ENCODE measurements at regions of chr11 and their contacts with region 1.

Region 1: GRCh38 chr11:16820324-16821092 is 82.1 kb downstream of the C11orf58 start:
- DNase-seq: peak; percentile 77 to 82
- ATAC-seq: peak; percentile 86 to 90
- H3K4me3 ChIP-seq: no peak overlapping the region
- H3K27ac ChIP-seq: peak overlapping the region in 1 of 2 experiments; percentile 50; a peak in 2 of 6 replicates
- H3K4me1 ChIP-seq: peaks cover 29% of the 10 kb centered on the region
- CTCF ChIP-seq: peak; percentile 91
- EP300 ChIP-seq: no peak
- POLR2A ChIP-seq: no peak
- RAD21 ChIP-seq: peak; percentile 73 to 75

Region 2: GRCh38 chr11:16791191-16791961 is 29.1 kb before region 1 on chr11:
- CTCF ChIA-PET with region 1: interaction called, 56 read pairs
- POLR2A ChIA-PET with region 1: no interaction called
- DNase-seq: peak; percentile 68 to 75
- ATAC-seq: peak; percentile 75 to 89
- H3K4me3 ChIP-seq: no peak overlapping the region
- H3K27ac ChIP-seq: peak overlapping the region; percentile 72 to 82
- H3K4me1 ChIP-seq: peaks cover 34% of the 10 kb centered on the region
- CTCF ChIP-seq: no peak
- EP300 ChIP-seq: no peak
- POLR2A ChIP-seq: no peak
- RAD21 ChIP-seq: no peak

Region 3: GRCh38 chr11:16801288-16801980 is 19.1 kb before region 1 on chr11:
- CTCF ChIA-PET with region 1: interaction called, 62 read pairs
- POLR2A ChIA-PET with region 1: no interaction called
- DNase-seq: no peak
- ATAC-seq: no peak
- H3K4me3 ChIP-seq: no peak overlapping the region
- H3K27ac ChIP-seq: no peak overlapping the region
- H3K4me1 ChIP-seq: peaks cover 22% of the 10 kb centered on the region
- CTCF ChIP-seq: no peak
- EP300 ChIP-seq: no peak
- POLR2A ChIP-seq: no peak
- RAD21 ChIP-seq: no peak

Region 4: DNA sequence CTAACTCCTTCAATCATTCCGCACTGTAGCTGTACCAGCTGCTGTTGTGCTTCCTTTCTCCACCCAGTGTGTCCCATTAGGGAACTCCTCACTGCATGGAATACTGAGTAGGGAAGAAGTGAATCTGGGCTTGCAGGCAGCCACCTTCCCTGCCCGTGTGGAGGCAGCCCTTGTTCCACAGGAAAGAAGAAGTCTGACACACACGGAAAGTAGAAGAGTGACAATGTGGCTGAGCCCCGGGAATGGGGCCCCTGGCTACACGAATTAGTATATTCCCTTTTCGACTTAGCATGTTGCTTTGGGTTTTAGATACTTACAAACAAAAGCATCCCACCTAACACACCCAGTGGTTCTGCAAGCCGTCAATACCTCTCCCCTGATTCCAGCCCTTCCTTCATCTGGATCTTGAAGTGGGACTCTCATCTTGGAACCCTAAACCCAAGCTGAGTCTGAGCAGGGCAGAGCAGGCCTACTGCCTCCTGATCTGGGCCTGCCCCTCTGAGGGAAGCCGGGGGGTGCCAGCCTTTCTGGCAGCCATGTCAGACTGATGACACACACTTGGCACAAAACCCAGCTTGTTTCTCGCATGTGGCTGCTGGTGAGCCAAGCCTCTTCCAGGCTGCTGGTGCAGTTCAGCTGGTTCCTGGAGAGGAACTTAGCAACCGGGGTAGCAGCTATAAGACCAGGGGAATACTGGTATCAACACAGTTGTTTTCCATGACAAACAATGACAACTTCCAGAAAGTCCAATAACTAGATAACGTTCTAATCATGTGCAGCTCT is 10.4 kb before region 1 on chr11:
- CTCF ChIA-PET with region 1: interaction called, 62 read pairs
- POLR2A ChIA-PET with region 1: no interaction called
- DNase-seq: no peak
- ATAC-seq: no peak
- H3K4me3 ChIP-seq: no peak overlapping the region
- H3K27ac ChIP-seq: no peak overlapping the region
- H3K4me1 ChIP-seq: peaks cover 16% of the 10 kb centered on the region
- CTCF ChIP-seq: no peak
- EP300 ChIP-seq: no peak
- POLR2A ChIP-seq: no peak
- RAD21 ChIP-seq: no peak

Region 5: GRCh38 chr11:16831316-16832192 is 11.0 kb after region 1 on chr11:
- CTCF ChIA-PET with region 1: interaction called, 63 read pairs
- POLR2A ChIA-PET with region 1: no interaction called
- DNase-seq: no peak
- ATAC-seq: no peak
- H3K4me3 ChIP-seq: no peak overlapping the region
- H3K27ac ChIP-seq: no peak overlapping the region
- H3K4me1 ChIP-seq: no peaks in the 10 kb centered on the region
- CTCF ChIP-seq: no peak
- EP300 ChIP-seq: no peak
- POLR2A ChIP-seq: no peak
- RAD21 ChIP-seq: no peak

Region 6: GRCh38 chr11:16881074-16881709 is 60.7 kb after region 1 on chr11:
- CTCF ChIA-PET with region 1: interaction called, 21 read pairs
- POLR2A ChIA-PET with region 1: no interaction called
- DNase-seq: no peak
- ATAC-seq: peak; percentile 52 to 72; a peak in 2 of 6 replicates
- H3K4me3 ChIP-seq: no peak overlapping the region
- H3K27ac ChIP-seq: no peak overlapping the region
- H3K4me1 ChIP-seq: peaks cover 7% of the 10 kb centered on the region; the same call in 1 of the 3 replicates
- CTCF ChIP-seq: no peak
- EP300 ChIP-seq: no peak
- POLR2A ChIP-seq: no peak
- RAD21 ChIP-seq: no peak